Heart left ventricle (tissue), 16 donors: ENCODE measurements at regions of chr12 and their contacts with region 1.

Region 1: DNA sequence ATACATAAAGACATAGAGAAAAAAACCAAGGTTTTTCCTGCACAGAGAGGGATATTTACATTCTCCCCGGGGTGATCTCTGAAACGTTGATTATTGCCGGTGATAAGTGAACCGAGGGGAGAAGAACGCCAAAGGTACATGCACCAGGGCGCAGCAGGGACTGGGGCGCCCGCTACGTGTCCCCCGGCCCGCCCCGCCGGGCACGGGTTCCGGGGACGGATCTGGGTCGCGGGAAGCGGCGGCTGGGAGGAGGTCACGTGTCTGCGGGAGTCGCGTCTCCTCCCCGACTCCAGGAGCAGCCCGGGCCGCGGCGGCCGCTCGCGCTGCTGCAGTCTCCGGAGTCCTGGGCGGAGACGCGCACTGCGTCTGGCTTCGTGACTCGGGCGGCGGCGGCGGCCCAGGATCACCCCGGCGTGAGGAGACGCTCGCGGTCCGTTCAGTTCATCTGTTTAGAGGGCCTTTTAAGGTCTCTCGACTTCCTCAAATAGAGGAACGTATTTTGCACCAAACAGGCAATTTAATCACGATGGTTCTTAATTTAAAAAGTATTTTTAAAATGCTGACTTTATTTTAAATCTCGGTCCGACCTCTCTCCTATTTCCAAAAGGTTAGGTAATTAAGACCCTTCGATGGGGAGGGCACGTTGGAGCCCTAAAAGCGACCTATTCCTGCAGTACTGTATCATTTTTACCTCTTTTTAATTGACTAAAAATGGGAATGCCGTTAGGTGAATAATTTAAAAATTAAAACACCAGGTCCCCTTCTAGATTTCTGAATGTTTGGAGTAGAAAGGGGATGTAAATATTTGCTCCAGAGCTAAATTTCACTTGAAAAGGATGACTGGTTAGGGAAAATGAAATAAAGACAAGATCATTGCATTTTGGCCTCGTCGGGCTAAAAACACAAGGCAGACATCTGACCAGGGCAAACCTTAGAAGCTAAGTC is 1.8 kb upstream of the BHLHE41 start:
- DNase-seq: peak; percentile 90 to 95 (median 91)
- ATAC-seq: peak; percentile 62 to 85 (median 80)
- H3K4me3 ChIP-seq: peak overlapping the region; percentile 38 to 84 (median 68)
- H3K27ac ChIP-seq: peak overlapping the region; percentile 76 to 98 (median 95)
- H3K4me1 ChIP-seq: peaks cover 0 to 26% (median 11%) of the 10 kb centered on the region in 12 donors
- H3K27me3 ChIP-seq: peaks cover 0 to 42% (median 0%) of the 10 kb centered on the region in 9 donors
- CTCF ChIP-seq: peak in 2 of 12 donors; percentile 29 to 31
- POLR2A ChIP-seq: no peak

Region 2: DNA sequence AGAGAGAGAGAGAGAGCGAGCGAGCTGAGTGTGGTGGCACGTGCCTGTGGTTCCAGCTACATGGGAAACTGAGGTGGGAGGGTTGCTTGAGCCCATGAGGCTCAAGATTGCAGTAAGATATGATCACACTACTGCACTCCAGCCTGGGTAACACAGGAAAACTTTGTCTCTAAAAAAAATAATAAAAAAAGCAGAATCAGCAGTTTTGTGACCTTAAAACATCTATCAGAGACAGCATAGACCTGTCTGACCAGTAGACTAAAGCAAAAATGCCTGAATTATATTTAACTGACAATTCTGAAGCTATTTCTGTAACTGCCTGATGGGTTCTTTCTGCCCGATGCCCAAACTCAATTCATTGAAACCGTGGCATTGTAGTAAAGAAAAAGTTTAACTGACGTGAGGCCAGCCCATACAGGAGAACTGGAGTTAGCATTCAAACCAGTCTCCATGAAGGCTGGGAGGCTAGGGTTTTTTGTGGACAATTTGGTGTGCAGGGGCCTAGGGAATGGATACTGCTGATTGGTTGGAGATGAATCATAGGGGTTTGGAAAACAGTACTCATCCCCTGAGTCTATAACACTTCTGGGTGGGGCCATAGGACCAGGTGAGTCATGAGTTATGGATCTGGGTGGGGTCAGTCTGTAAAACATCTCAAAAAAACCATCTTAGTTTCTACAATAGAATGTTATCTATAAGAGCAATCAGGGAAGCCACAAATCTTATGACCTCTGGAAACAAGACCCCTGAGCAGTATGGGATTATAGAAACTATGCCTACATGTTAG is 176.1 kb before region 1 on chr12:
- intact Hi-C with region 1: no loop called
- DNase-seq: no peak
- ATAC-seq: no peak
- H3K4me3 ChIP-seq: no peak overlapping the region
- H3K27ac ChIP-seq: no peak overlapping the region
- H3K4me1 ChIP-seq: no peaks in the 10 kb centered on the region
- H3K27me3 ChIP-seq: no peaks in the 10 kb centered on the region
- CTCF ChIP-seq: no peak
- POLR2A ChIP-seq: no peak

Region 3: DNA sequence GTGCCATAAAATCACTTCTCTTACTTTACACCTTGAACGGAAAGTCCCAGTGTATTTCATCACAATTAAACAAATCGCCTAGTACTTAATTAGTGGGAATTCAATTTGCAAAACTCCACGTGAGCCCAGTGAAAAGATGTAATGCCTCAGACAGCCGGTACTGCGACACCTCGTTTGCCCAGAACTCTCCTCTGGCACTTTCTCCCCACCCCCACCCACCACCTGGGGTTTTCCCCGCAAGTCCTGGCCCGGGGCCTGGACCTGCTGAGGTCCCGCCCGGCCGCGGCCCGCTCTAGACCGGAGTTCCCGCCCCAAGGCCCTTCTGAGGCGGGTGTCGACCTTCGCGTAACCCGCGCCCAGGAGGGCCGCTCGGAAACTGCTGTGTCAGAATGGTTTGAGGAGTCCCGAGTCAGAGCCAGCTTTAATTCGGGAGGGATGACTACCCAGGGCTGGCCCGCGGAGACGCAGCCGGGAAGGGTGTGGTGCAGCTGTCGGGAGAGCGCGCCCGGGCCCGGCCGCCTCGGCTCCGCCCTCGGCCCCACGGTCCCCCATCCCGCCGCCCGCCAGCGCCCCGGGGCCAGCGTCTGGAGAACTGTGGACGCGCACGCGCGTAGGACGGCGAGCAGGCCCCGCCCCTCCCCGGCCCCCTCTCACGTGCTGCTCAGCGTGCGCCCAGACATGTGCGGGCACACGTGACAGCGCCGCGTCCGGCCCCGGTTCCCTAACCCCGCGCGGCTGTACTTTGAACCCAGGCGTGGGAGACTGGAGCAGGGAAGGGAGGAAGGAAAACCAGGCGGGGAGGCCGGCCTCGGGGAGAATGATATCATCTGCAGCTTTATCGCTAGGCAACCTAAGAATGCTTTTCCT is 12.5 kb before region 1 on chr12:
- intact Hi-C with region 1: loop called in 1 of 10 experiments (anchors 1 kb)
- DNase-seq: peak; percentile 95 to 96 (median 96)
- ATAC-seq: peak; percentile 83 to 97 (median 92)
- H3K4me3 ChIP-seq: peak overlapping the region; percentile 3 to 65 (median 54)
- H3K27ac ChIP-seq: peak overlapping the region; percentile 88 to 98 (median 93)
- H3K4me1 ChIP-seq: peaks cover 0 to 56% (median 36%) of the 10 kb centered on the region in 12 donors
- H3K27me3 ChIP-seq: no peaks in the 10 kb centered on the region
- CTCF ChIP-seq: peak in 4 of 12 donors; percentile 22 to 43 (median 34)
- POLR2A ChIP-seq: peak in 1 of 2 donors; percentile 89

Region 4: DNA sequence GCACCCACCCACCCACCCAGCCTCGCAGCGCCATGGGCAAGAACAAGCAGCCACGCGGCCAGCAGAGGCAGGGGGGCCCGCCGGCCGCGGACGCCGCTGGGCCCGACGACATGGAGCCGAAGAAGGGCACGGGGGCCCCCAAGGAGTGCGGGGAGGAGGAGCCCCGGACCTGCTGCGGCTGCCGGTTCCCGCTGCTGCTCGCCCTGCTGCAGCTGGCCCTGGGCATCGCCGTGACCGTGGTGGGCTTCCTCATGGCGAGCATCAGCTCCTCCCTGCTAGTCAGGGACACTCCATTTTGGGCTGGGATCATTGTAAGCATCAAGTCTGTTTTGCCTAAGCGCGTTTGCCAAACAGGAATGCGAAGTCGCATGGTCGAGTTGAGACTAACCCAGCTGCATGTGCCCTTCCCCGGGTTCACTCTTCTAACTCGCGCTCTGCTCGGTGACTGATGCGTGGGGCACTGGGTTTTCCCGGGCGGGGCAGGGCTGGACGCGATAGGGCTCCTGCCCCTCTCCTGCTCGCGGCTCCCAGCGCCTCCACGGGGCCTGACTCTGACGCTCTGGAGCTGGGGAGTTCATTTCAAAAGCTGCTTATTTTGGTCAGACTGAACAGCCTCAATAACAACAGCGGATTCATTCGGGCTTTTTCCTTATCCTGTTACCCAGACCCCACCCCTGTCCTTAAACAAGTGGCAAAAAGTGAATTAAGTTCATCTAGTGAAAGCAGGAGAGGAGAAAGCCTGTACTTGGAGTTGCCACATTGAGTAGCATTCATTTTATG is 69.2 kb after region 1 on chr12:
- intact Hi-C with region 1: loop called (anchors 1 to 10 kb)
- DNase-seq: peak; percentile 59 to 71 (median 62)
- ATAC-seq: peak; percentile 72 to 89 (median 86)
- H3K4me3 ChIP-seq: peak overlapping the region; percentile 32 to 79 (median 67)
- H3K27ac ChIP-seq: peak overlapping the region; percentile 35 to 93 (median 84)
- H3K4me1 ChIP-seq: peaks cover 0 to 45% (median 25%) of the 10 kb centered on the region in 12 donors
- H3K27me3 ChIP-seq: peaks cover 0 to 15% (median 0%) of the 10 kb centered on the region in 9 donors
- CTCF ChIP-seq: no peak
- POLR2A ChIP-seq: no peak

Region 5: GRCh38 chr12:26298785-26299621 is 172.4 kb after region 1 on chr12:
- intact Hi-C with region 1: loop called in 1 of 10 experiments (anchors 10 kb)
- DNase-seq: no peak
- ATAC-seq: peak; percentile 93 to 99 (median 96)
- H3K4me3 ChIP-seq: peak overlapping the region in 8 of 12 donors; percentile 5 to 37 (median 18)
- H3K27ac ChIP-seq: peak overlapping the region in 11 of 12 donors; percentile 50 to 84 (median 69)
- H3K4me1 ChIP-seq: peaks cover 0 to 28% (median 7%) of the 10 kb centered on the region in 12 donors
- H3K27me3 ChIP-seq: no peaks in the 10 kb centered on the region
- CTCF ChIP-seq: peak in 5 of 12 donors; percentile 0 to 36 (median 22)
- POLR2A ChIP-seq: no peak

Region 6: DNA sequence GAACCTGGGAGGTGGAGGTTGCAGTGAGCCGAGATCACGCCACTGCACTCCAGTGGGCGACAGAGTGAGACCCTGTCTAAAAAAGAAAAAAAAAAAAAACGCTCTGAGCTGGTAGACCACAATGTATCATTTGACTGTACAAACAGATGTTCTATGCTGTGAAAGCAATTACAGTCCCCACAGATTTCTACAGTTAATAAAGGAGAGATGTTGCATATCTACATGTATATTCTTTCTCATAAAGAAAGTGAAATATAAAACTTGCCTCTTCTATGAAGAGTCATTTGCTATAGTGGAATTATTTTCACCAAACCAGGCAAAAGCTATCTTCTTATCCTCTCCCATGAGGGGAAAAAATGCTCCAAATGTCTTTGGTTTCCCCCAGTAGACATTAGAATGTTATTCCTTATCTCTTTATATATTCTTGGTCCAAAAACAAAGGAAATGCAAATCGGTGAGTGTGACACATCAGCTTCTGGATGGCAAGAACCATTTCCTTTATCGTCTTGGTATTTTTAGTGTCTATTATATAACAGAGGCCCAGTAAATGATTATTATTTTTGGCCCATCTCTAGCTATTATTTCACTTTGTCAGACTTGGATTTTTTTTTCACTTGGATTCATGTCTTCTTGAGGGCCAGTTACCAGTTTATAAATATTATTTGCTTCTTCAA is 299.1 kb after region 1 on chr12:
- intact Hi-C with region 1: loop called in 2 of 10 experiments (anchors 10 kb)
- DNase-seq: no peak
- ATAC-seq: no peak
- H3K4me3 ChIP-seq: no peak overlapping the region
- H3K27ac ChIP-seq: no peak overlapping the region
- H3K4me1 ChIP-seq: peaks cover 0 to 14% (median 3%) of the 10 kb centered on the region in 12 donors
- H3K27me3 ChIP-seq: no peaks in the 10 kb centered on the region
- CTCF ChIP-seq: no peak
- POLR2A ChIP-seq: no peak

Region 7: DNA sequence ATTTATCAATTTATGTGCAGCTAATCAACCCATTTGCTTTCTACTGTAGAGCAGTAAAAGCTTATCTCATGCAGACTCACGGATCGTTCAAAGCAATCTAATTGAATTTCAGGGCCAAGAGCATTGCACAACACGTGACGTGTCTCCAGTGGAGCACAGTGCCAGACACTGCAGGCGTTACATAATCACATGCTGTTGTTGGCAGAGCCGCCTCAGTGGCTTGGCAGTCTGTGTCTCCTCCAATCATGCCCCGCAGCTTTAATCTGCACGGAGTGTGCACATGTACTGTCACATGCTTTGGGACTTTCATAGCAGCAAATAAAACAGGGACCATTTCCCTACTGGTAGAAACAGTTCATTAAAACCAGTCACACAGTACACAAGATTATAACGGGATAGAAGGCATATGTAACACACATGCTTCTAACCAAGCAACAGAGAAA is 397.1 kb after region 1 on chr12:
- intact Hi-C with region 1: loop called in 2 of 10 experiments (anchors 10 kb)
- DNase-seq: peak; percentile 84 to 93 (median 87)
- ATAC-seq: peak; percentile 96 to 100 (median 100)
- H3K4me3 ChIP-seq: no peak overlapping the region
- H3K27ac ChIP-seq: peak overlapping the region in 10 of 12 donors; percentile 18 to 65 (median 47)
- H3K4me1 ChIP-seq: peaks cover 0 to 13% (median 0%) of the 10 kb centered on the region in 12 donors
- H3K27me3 ChIP-seq: no peaks in the 10 kb centered on the region
- CTCF ChIP-seq: no peak
- POLR2A ChIP-seq: no peak